Posterior vena cava (tissue), 2 donors: ENCODE measurements at regions of chr14 and their contacts with region 1.

Region 1: DNA sequence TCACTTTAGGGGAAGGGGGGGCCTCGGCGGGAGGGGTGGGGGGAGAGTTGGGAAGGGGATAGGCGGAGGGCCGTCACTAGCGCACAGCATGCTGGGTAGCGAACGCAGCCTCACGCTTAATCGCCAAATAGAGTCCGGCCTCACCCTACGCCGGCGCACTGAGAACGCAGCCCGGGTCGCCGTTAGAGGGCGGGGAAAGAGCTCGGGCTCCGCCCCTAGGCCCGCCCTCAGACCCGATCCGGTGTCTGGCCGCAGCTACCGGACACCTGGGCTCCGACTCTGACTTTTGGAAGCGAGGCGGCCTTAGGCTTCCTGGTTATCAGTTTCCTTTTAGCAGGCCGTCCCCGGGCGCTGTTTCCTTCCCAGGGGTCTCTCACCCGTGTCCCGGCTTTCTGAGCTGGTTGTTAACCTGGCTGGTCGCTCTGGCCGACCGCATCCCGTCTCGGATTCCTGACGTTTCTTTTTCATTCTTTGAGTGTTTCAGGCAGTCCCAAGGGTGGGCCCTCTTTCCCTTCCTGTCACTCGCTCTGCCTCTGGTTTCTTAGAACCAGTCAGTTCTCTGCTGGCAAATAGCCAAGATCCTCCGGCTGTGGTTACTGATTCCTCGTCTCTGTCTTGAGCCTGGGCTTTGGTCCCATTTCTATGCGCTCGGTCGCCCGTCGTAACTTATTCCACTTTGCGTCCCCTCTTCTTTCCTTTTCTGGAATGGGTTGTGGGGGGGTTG is 378 bp upstream of the STRN3 start:
- DNase-seq: peak; percentile 99

Region 2: DNA sequence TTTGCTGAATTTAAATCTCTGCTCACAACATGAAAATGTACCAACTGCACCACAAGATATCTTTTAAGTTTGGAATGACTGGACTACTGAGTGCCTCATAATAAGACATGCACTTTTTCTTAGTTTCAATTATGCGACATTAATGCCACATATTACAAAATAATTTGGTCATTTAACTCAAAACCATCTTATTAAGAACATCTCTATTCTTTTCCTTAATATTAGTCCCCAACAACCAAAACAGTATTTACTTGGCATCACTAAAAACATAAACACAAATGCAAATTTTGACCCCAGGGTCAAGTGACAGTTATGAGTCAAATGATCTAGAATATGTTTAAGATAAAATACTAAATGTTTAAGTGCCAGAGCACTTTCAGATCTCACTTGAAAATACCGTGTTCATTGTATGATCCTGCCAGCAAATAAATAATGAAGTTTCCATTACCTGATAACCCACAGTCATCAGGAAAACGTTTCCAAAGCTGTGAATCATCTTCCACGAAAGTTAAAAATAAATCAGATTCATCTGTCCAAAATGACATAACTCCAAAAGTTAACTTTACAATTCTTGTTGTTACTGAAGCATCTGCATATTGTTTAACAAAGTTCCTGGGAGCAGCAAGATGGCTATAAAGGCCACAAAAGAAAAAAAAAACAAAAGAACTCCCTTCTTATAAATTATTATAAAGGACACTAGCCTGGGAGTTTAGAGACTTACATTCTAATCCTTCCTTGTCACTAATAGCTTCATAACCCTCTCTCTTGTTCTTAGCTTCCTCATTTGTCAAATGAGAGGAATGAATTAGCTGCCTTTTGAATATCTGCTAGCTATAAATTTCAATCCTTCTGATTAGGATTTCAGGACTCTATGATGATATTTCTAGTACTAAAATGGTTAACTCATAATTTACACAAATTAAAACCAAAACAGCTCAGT is 31.6 kb before region 1 on chr14:
- intact Hi-C with region 1: loop called in 1 of 2 experiments (anchors 5 kb)
- DNase-seq: no peak

Region 3: DNA sequence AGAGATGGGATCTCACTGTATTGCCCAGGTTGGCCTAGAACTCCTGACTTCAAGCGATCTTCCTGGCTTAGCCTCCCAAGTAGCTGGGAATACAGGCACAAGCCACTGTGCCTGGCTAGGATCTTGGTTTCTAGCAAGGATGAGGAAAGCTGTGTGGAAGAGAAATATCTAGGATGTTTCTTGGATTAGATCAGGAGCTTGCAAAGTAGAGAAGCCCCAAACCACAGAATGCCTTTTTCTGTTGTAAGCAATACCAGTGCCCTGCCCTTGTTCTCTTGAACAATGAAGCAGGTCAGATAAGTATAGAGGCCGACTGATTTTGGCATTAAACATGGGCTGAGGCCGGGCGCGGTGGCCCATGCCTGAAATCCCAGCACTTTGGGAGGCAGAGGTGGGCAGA is 43.9 kb after region 1 on chr14:
- intact Hi-C with region 1: loop called in 1 of 2 experiments (anchors 10 kb)
- DNase-seq: no peak